B cell (primary cell): ENCODE measurements at regions of chr11 and their contacts with region 1.

Region 1: GRCh38 chr11:45815449-45816146 is 10.6 kb downstream of the SLC35C1 start:
- DNase-seq: no peak
- ATAC-seq: no peak
- H3K4me3 ChIP-seq: no peak overlapping the region
- H3K4me3 Mint-ChIP-seq: no peak overlapping the region
- H3K27ac ChIP-seq: no peak overlapping the region
- H3K27ac Mint-ChIP-seq: peak overlapping the region; percentile 68
- H3K4me1 ChIP-seq: peaks cover 19 to 33% of the 10 kb centered on the region in 2 donors
- H3K4me1 Mint-ChIP-seq: peaks cover 35% of the 10 kb centered on the region
- H3K27me3 ChIP-seq: no peaks in the 10 kb centered on the region
- H3K27me3 Mint-ChIP-seq: no peaks in the 10 kb centered on the region
- CTCF ChIP-seq: no peak

Region 2: GRCh38 chr11:45804761-45805304 is 10.8 kb before region 1 on chr11 and contains the start of gene SLC35C1:
- CTCF ChIA-PET with region 1: interaction called, 3 read pairs
- POLR2A ChIA-PET with region 1: interaction called, 3 read pairs
- intact Hi-C with region 1: loop called (anchors 1 kb)
- DNase-seq: peak; percentile 95
- ATAC-seq: peak; percentile 96
- H3K4me3 ChIP-seq: peak within 1 kb of the TSS; percentile 42 to 96 (median 92)
- H3K4me3 Mint-ChIP-seq: peak within 1 kb of the TSS; percentile 94
- H3K27ac ChIP-seq: peak within 1 kb of the TSS; percentile 62 to 67
- H3K27ac Mint-ChIP-seq: peak within 1 kb of the TSS; percentile 91
- H3K4me1 ChIP-seq: peaks cover 27 to 35% of the 10 kb centered on the region in 2 donors
- H3K4me1 Mint-ChIP-seq: peaks cover 41% of the 10 kb centered on the region
- H3K27me3 ChIP-seq: no peaks in the 10 kb centered on the region
- H3K27me3 Mint-ChIP-seq: no peaks in the 10 kb centered on the region
- CTCF ChIP-seq: no peak
- total RNA-seq, gene SLC35C1: 12.5 and 13.8 TPM in 2 replicates